Activated CD4-positive, alpha-beta memory T cell treated with anti-CD3 and anti-CD28 coated beads for 36 hours (primary cell): ENCODE measurements at regions of chr3 and their contacts with region 1.

Region 1: DNA sequence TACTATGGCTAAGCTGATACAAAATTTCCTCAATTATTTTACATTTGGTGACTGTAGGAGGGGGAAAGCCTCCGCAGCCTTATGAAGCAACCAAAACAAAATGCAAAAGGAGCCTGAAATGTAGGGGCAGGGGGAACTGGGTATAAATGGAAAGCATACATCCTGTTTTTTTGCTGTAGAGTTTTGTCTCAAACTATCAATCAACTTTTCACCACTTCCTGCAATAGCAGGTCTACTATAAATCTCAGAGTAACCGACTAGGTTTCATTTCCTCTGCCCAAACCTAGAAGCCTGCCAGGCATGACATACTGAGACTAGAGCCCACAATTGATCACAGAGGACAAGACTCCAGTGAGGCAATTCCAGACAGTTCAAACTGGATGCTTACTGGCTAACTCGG is 91.3 kb downstream of the SHQ1 start:
- DNase-seq: peak; percentile 62
- H3K4me3 Mint-ChIP-seq: peak overlapping the region; percentile 33
- H3K27ac Mint-ChIP-seq: peak overlapping the region; percentile 77
- H3K4me1 Mint-ChIP-seq: peaks cover 36% of the 10 kb centered on the region
- H3K27me3 Mint-ChIP-seq: no peaks in the 10 kb centered on the region

Region 2: DNA sequence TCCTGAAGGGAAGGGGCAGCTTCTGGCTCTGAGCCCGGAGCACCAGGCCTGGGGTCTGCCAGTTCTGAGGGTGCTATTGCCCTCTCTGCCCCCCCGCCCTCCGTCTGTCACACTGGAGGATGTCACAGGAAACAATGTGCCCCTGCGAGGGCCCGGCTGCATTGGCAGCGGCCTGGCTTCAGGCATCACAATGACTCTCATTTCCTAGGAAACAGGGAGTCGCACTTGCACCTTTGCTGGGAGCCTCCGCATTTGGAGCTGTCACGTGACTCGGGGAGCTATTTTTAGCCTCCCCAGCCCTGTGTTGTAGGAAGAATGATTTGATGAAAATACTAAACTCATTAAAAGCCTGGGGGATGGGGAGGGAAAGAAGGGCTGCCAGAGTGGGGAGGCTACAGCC is 427.5 kb before region 1 on chr3:
- CTCF ChIA-PET with region 1: no interaction called
- POLR2A ChIA-PET with region 1: no interaction called
- intact Hi-C with region 1: no loop called
- DNase-seq: no peak
- H3K4me3 Mint-ChIP-seq: no peak overlapping the region
- H3K27ac Mint-ChIP-seq: no peak overlapping the region
- H3K4me1 Mint-ChIP-seq: no peaks in the 10 kb centered on the region
- H3K27me3 Mint-ChIP-seq: peaks cover 2% of the 10 kb centered on the region

Region 3: GRCh38 chr3:72722930-72723726 is 33.8 kb before region 1 on chr3:
- CTCF ChIA-PET with region 1: no interaction called
- POLR2A ChIA-PET with region 1: no interaction called
- intact Hi-C with region 1: loop called (anchors 1 kb)
- DNase-seq: peak; percentile 20
- H3K4me3 Mint-ChIP-seq: no peak overlapping the region
- H3K27ac Mint-ChIP-seq: peak overlapping the region; percentile 3
- H3K4me1 Mint-ChIP-seq: peaks cover 17% of the 10 kb centered on the region
- H3K27me3 Mint-ChIP-seq: no peaks in the 10 kb centered on the region

Region 4: DNA sequence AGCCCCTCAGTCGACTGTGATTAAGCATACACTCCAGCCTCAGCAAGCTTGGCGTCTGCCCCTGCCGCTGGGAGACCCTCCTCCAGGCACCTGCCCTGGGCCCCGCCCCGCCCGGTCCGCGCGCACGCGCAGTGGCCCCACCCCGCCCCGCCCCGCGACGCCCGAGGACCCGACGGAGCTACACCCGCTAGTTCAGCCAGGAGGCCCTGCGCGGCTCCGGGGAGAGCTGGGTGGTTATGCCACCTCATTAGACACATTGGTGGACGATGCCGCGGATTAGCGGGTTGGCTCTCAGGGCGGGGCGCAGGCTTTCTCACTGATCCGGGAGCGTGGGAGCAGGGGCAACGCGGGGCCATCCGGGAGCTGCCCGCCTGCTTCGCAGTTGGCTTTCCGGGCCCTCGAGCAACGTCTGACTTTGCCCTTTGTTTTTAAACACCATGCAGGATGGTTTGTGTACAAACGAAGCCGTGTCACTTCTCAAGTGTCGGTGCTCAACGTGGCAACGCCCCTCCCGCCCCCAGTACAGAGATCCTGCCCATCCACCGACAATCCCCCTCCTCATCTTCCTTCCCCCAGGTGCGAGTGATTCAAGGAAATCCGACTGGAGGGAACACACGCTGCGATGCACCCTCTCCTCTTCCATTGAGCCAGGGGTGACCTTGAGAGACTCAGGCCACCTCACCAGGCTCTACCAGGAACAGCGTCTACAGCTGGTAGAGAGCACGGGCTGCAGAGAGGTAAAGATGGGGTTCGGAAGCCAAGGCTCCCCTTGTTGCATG is 18.0 kb before region 1 on chr3:
- CTCF ChIA-PET with region 1: interaction called, 3 read pairs
- POLR2A ChIA-PET with region 1: no interaction called
- intact Hi-C with region 1: loop called (anchors 2 kb)
- DNase-seq: peak; percentile 85
- H3K4me3 Mint-ChIP-seq: peak overlapping the region; percentile 75
- H3K27ac Mint-ChIP-seq: peak overlapping the region; percentile 44
- H3K4me1 Mint-ChIP-seq: peaks cover 16% of the 10 kb centered on the region
- H3K27me3 Mint-ChIP-seq: no peaks in the 10 kb centered on the region

Region 5: DNA sequence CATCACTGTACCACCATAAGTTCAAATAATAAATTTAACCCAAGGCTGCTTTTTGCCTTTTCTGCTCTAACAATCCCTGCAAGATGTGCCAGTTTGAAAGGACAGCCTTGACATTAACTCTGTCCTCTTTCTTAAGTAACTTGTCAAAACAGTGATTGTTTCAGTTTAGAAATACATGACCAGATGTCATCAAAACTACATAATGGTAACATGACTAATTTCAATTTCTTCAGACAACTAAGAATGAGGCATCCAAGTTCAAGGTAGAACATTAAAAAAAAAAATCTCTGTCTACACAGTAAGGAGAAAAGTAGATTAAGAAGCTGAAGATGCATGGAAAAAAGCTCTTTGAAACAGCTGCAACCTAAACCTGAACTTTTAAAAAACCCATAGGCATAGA is 44.0 kb after region 1 on chr3:
- CTCF ChIA-PET with region 1: no interaction called
- POLR2A ChIA-PET with region 1: no interaction called
- intact Hi-C with region 1: loop called (anchors 5 kb)
- DNase-seq: no peak
- H3K4me3 Mint-ChIP-seq: no peak overlapping the region
- H3K27ac Mint-ChIP-seq: no peak overlapping the region
- H3K4me1 Mint-ChIP-seq: peaks cover 25% of the 10 kb centered on the region
- H3K27me3 Mint-ChIP-seq: no peaks in the 10 kb centered on the region